ENCODE measurements at regions of chr1 and their contacts with region 1.

Region 1: GRCh38 chr1:150053926-150054325 is 13.7 kb upstream of the VPS45 start:
- DNase-seq: no peak
- ATAC-seq: no peak
- H3K4me3 ChIP-seq: no peak overlapping the region
- H3K27ac ChIP-seq: no peak overlapping the region
- H3K4me1 ChIP-seq: no peaks in the 10 kb centered on the region
- H3K27me3 ChIP-seq: no peaks in the 10 kb centered on the region
- CTCF ChIP-seq: no peak

Region 2: DNA sequence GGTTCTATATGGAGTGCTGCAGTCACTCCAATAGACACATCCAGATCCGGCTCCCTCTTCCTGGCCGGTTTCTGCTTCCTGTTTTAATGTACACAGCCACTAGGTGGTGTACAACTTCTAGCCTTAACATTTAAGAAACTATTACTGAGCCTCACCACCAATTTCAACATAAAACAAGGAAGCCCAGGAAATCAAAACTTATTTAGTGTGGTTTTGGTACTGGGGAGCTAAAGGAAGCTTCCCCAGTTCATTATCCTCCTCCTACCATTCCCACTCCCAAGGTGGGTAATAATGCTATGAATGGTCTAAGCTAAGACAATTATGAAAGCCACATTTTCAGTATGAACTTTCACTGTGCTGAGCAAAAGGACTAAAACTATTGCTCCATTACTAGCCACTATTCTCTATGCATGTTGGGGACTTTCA is 91.8 kb before region 1 on chr1:
- CTCF ChIA-PET with region 1: interaction called, 4 read pairs
- POLR2A ChIA-PET with region 1: no interaction called
- in situ Hi-C with region 1: no loop called
- intact Hi-C with region 1: loop called (anchors 1 kb)
- DNase-seq: peak; percentile 51
- ATAC-seq: peak; percentile 96
- H3K4me3 ChIP-seq: no peak overlapping the region
- H3K27ac ChIP-seq: no peak overlapping the region
- H3K4me1 ChIP-seq: no peaks in the 10 kb centered on the region
- H3K27me3 ChIP-seq: no peaks in the 10 kb centered on the region
- CTCF ChIP-seq: peak; percentile 84

Region 3: DNA sequence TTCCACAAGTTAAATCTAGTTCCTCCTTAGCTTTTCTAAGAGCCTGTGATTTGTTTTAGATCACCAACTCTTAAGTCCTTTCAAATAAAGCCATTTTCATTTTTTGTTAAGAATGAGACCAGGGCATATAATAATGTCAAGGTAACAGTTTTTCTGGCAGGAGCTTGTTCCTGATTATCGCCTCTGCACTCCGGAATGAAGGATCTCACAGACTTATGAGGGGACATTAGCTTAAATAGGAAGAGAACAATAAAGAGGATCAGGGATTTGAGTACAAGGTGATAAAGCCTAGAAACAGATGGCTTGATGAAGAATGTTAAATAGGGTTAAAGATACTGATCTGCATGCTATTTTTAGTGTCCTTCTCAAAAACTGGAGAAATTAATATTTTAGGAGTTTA is 29.8 kb before region 1 on chr1:
- CTCF ChIA-PET with region 1: interaction called, 10 read pairs
- POLR2A ChIA-PET with region 1: no interaction called
- in situ Hi-C with region 1: no loop called
- intact Hi-C with region 1: no loop called
- DNase-seq: no peak
- ATAC-seq: no peak
- H3K4me3 ChIP-seq: no peak overlapping the region
- H3K27ac ChIP-seq: no peak overlapping the region
- H3K4me1 ChIP-seq: no peaks in the 10 kb centered on the region
- H3K27me3 ChIP-seq: no peaks in the 10 kb centered on the region
- CTCF ChIP-seq: no peak

Region 4: DNA sequence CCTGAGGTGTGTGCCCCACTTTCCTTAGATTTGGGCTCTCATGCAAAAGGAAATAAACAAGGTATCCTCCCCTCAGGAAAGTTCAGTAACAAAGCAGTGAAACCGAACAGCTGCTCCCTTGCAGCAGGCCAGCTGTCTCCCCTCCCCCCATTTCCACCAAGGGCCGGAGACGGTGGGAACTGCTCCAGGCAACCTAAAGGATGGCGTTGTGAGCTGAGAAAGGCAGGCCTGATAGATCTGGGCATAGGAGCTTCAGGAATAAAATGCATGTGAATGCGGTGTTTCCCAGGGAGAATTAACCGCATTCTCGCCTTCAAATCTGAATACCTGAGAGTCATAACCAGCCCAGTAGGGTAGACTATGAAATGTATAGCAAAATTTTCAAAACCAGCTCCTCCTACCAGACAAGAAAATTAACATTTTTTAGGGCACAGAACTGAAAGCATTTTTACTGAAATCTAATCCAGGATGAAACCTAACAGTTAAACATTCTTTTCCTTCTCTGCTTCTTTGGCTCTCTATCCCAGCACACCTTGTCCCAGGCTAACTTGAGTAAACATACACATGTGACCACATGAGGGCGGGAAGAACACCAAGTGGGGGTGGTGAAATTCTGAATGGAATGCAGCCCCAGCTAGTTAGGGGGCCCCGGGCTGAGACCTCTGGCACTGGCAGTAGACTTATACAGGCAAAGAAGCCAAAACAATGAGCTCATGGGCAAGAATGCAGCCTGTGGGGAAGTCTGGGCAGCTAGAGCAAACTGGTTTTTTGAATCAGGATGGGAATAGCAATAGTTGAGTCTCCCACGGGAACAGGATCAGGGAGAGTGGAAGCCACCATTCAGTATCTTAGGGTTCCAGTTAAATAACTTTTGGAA is 514.0 kb after region 1 on chr1:
- CTCF ChIA-PET with region 1: no interaction called
- POLR2A ChIA-PET with region 1: no interaction called
- in situ Hi-C with region 1: no loop called
- intact Hi-C with region 1: no loop called
- DNase-seq: no peak
- ATAC-seq: peak; percentile 58
- H3K4me3 ChIP-seq: peak overlapping the region; percentile 1 to 9; a peak in 2 of 4 replicates
- H3K27ac ChIP-seq: peak overlapping the region; percentile 82
- H3K4me1 ChIP-seq: peaks cover 73% of the 10 kb centered on the region
- H3K27me3 ChIP-seq: no peaks in the 10 kb centered on the region
- CTCF ChIP-seq: no peak